ENCODE measurements at regions of chr2 and their contacts with region 1.

Region 1: GRCh38 chr2:37168217-37168981 is 11.6 kb upstream of the EIF2AK2 start:
- DNase-seq: peak; percentile 60
- H3K4me3 ChIP-seq: no peak overlapping the region
- H3K27ac ChIP-seq: no peak overlapping the region
- H3K4me1 ChIP-seq: no peaks in the 10 kb centered on the region
- CTCF ChIP-seq: peak; percentile 94

Region 2: DNA sequence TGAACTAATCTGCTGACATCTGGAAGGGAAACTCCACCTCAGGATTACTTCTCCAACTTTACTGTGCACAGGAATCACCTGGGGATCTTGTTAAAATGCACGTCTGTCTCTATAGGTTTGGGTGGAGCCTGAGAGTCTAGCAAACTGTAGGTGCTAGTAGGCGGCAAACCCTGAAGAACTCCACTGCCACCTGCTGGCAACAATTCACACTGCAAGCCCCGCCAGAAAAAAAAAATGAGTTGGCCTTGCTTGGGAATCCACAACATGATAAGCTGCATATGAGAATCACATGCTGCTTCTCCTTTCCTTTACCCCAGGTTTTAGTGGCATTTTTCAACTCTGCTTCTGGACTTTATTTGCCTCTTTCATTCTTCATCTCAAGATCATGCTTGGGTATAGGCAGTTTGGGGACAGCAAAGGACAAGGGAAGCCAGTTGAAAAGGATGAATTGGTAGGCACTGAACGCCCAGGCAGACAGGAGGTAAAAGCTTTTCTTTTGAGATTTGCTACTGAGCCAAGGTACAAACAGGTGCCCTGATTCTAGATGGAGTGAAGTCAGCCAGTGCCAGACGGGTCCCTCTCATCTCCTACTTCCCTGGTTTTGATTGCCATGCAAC is 383.1 kb before region 1 on chr2:
- CTCF ChIA-PET with region 1: no interaction called
- POLR2A ChIA-PET with region 1: no interaction called
- intact Hi-C with region 1: loop called (anchors 10 kb)
- DNase-seq: peak; percentile 62
- H3K4me3 ChIP-seq: no peak overlapping the region
- H3K27ac ChIP-seq: no peak overlapping the region
- H3K4me1 ChIP-seq: peaks cover 9% of the 10 kb centered on the region
- CTCF ChIP-seq: peak; percentile 98

Region 3: DNA sequence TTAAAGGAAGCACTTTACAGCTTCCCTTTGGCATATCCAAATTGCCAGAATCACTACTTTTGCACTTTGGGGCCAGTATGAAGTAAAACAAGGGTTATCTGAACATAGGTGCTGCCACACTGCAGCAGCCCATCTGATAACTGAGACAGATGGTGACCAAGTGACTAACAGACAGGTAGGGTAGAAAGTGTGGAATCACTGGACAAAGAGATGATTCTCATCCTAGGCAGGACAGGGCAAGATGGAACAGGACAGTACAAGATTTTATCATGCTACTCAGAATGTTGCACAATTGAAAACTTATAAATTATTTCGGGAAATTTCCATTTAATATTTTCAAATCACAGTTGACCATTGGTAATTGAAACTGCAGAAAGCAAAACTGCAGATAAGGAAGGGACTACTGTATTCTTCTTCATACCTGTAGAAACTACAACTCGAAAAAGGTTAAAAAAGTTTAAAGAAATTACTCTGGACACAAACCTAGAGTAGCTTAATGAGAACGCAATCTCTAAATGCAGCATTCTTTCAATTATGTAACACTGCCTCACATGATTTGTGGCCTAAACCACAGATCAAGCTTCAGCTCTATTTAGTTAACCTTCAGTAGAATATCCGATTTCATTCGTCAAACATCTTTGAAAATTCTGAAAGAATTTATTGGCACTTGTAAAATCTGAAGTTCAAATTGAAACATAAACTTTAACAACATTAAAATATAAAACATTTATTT is 115.6 kb before region 1 on chr2:
- CTCF ChIA-PET with region 1: no interaction called
- POLR2A ChIA-PET with region 1: no interaction called
- intact Hi-C with region 1: no loop called
- DNase-seq: no peak
- H3K4me3 ChIP-seq: no peak overlapping the region
- H3K27ac ChIP-seq: no peak overlapping the region
- H3K4me1 ChIP-seq: no peaks in the 10 kb centered on the region
- CTCF ChIP-seq: no peak

Region 4: GRCh38 chr2:37263839-37264238 is 95.4 kb after region 1 on chr2:
- CTCF ChIA-PET with region 1: no interaction called
- POLR2A ChIA-PET with region 1: no interaction called
- intact Hi-C with region 1: loop called (anchors 5 kb)
- DNase-seq: peak; percentile 19
- H3K4me3 ChIP-seq: no peak overlapping the region
- H3K27ac ChIP-seq: no peak overlapping the region
- H3K4me1 ChIP-seq: peaks cover 20% of the 10 kb centered on the region
- CTCF ChIP-seq: peak; percentile 55

Region 5: DNA sequence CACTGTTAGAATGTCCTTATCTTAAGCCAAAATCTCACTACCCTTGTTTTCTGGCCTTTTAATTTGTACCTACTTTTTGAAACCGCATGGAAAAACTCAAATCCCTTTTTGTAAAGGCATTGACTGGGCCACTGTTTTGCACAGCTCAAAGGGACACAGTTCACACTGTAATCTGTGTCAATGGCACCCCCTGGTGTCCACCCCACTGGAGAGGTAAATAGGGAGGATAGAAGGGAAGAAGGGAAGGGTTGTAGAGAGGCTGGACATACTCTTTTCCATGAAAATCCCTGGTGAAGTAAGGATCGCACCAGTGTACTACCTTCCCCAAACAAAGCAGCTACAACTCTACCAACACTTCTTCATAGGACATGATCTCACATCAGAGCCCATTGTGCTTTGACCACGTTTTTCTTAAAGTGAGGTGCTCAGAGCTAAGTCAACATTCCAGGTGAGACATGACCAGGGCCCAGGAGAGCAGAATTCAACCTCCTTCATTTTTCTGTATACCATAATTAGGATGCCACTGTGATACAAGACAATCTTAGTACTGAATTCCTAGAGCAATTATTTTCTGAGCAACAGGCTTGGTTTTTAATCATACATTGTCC is 664.3 kb after region 1 on chr2:
- CTCF ChIA-PET with region 1: no interaction called
- POLR2A ChIA-PET with region 1: no interaction called
- intact Hi-C with region 1: loop called (anchors 2 kb)
- DNase-seq: peak; percentile 75
- H3K4me3 ChIP-seq: no peak overlapping the region
- H3K27ac ChIP-seq: no peak overlapping the region
- H3K4me1 ChIP-seq: no peaks in the 10 kb centered on the region
- CTCF ChIP-seq: peak; percentile 90

Region 6: DNA sequence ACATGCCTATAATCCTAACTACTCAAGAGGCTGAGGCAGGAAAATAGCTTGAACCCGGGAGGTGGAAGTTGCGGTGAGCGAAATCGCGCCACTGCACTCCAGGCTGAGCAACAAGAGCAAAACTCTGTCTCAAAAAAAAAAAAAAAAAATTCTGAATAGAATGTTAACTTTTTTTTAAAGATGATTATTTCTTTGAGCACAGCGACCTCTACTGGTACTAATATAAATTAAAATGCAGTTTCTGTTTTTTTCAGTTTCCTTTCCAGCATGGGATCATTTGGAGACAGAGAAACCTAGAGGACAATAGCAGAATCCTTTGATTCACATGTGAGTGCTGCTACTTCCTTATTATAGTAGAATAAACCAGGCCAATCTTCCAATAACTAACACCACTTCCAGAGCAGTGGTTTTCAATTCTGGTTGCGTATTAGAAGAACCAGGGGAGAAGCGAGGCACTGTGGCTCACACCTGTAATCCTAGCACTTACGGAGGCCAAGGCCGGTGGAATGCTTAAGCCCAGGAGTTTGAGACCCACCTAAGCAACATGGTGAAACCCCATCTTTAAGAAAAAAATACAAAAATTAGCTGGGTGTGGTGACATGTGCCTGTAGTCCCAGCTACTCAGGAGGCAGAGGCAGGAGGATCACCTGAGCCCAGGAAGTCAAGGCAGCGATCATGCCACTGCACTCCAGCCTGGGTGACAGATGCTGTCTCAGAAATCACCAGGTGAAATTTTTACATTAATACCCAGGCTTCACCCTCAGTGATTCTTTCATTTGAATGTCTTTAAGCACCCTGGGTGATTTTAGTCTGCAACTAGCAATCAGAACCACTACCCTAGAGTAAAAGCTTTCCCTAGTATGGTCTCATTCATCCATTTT is 1572.7 kb after region 1 on chr2:
- CTCF ChIA-PET with region 1: no interaction called
- POLR2A ChIA-PET with region 1: no interaction called
- intact Hi-C with region 1: no loop called
- DNase-seq: peak; percentile 55
- H3K4me3 ChIP-seq: no peak overlapping the region
- H3K27ac ChIP-seq: peak overlapping the region; percentile 5
- H3K4me1 ChIP-seq: peaks cover 8% of the 10 kb centered on the region
- CTCF ChIP-seq: peak; percentile 88